A673 (cell line): ENCODE measurements at regions of chr2 and their contacts with region 1.

Region 1: GRCh38 chr2:177724398-177725287 is 332.1 kb downstream of the AGPS start:
- DNase-seq: peak; percentile 72
- H3K4me3 ChIP-seq: no peak overlapping the region
- H3K27ac ChIP-seq: no peak overlapping the region
- H3K4me1 ChIP-seq: no peaks in the 10 kb centered on the region
- H3K27me3 ChIP-seq: no peaks in the 10 kb centered on the region
- CTCF ChIP-seq: peak; percentile 95

Region 2: DNA sequence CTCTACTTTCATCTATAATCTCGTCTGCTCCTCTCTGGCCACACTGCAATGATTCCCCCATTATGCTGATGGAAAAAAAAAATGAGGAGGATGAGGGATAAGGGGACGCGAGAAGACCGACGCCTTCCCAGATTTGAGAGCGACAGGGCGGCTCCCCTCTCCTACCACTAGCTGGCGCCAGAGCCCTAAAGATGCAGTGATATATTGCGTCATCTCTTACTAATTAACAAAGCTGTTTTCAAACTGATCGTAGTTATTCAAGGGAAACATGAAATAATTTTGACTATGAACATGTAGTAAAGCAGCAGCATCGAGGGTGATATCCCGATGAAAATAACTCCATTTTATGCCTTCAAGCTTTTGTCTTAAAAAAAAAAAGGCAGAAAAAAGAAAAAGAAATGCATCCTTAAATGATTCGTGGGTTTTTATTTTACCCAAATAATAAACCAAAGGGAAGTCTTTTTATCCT is 560.0 kb before region 1 on chr2:
- CTCF ChIA-PET with region 1: interaction called, 3 read pairs
- POLR2A ChIA-PET with region 1: no interaction called
- intact Hi-C with region 1: loop called (anchors 5 kb)
- DNase-seq: peak; percentile 89
- H3K4me3 ChIP-seq: peak overlapping the region; percentile 28
- H3K27ac ChIP-seq: peak overlapping the region; percentile 66
- H3K4me1 ChIP-seq: peaks cover 48% of the 10 kb centered on the region
- H3K27me3 ChIP-seq: no peaks in the 10 kb centered on the region
- CTCF ChIP-seq: peak; percentile 100

Region 3: GRCh38 chr2:177419274-177419673 is 305.4 kb before region 1 on chr2:
- CTCF ChIA-PET with region 1: no interaction called
- POLR2A ChIA-PET with region 1: no interaction called
- intact Hi-C with region 1: loop called (anchors 5 kb)
- DNase-seq: peak; percentile 40
- H3K4me3 ChIP-seq: no peak overlapping the region
- H3K27ac ChIP-seq: peak overlapping the region; percentile 56
- H3K4me1 ChIP-seq: peaks cover 35% of the 10 kb centered on the region
- H3K27me3 ChIP-seq: no peaks in the 10 kb centered on the region
- CTCF ChIP-seq: no peak

Region 4: GRCh38 chr2:177489719-177490301 is 234.8 kb before region 1 on chr2:
- CTCF ChIA-PET with region 1: no interaction called
- POLR2A ChIA-PET with region 1: no interaction called
- intact Hi-C with region 1: loop called (anchors 1 kb)
- DNase-seq: peak; percentile 66
- H3K4me3 ChIP-seq: no peak overlapping the region
- H3K27ac ChIP-seq: no peak overlapping the region
- H3K4me1 ChIP-seq: peaks cover 14% of the 10 kb centered on the region
- H3K27me3 ChIP-seq: no peaks in the 10 kb centered on the region
- CTCF ChIP-seq: peak; percentile 73

Region 5: GRCh38 chr2:177622521-177622920 is 102.1 kb before region 1 on chr2:
- CTCF ChIA-PET with region 1: no interaction called
- POLR2A ChIA-PET with region 1: no interaction called
- intact Hi-C with region 1: loop called (anchors 2 kb)
- DNase-seq: peak; percentile 73
- H3K4me3 ChIP-seq: peak overlapping the region; percentile 15
- H3K27ac ChIP-seq: peak overlapping the region; percentile 56
- H3K4me1 ChIP-seq: peaks cover 25% of the 10 kb centered on the region
- H3K27me3 ChIP-seq: no peaks in the 10 kb centered on the region
- CTCF ChIP-seq: peak; percentile 66